ENCODE measurements at regions of chr16 and their contacts with region 1.

Region 1: GRCh38 chr16:3264137-3265036 is 8.0 kb upstream of the MEFV start:
- DNase-seq: peak; percentile 99
- H3K4me3 Mint-ChIP-seq: peak overlapping the region; percentile 80
- H3K27ac Mint-ChIP-seq: peak overlapping the region; percentile 93
- H3K4me1 Mint-ChIP-seq: peaks cover 24% of the 10 kb centered on the region
- H3K27me3 Mint-ChIP-seq: no peaks in the 10 kb centered on the region

Region 2: DNA sequence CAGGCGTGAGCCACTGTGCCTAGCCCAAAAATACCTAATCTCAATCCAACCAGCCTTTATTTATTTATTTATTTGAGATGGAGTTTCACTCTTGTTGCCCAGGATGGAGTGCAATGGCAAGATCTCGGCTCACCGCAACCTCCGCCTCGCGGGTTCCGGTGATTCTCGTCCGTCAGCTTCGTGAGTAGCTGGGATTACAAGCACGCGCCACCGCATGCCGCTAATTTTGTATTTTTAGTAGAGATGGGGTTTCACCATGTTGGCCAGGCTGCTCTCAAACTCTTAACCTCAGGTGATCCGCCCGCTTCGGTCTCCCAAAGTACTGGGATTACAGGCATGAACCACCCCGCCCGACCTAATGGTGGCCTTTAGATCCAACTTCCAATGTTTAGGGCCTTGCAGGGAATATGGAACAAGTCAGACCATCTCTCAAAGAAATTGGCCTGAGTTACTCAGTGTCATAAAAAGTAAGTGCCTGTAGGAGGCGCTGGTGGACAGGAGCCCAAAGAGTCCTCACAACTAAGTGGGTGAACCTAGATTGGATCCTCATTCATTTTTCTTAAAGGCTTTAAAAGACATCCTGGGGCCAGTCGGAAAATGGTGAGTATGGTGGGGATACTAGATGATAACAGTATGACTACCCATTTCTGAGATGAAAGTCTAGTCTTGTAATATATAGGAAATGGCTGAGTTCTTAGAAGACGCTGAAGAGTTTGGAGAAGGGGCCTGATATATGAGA is 169.9 kb before region 1 on chr16:
- CTCF ChIA-PET with region 1: no interaction called
- POLR2A ChIA-PET with region 1: no interaction called
- intact Hi-C with region 1: loop called (anchors 1 kb)
- DNase-seq: peak; percentile 75
- H3K4me3 Mint-ChIP-seq: peak overlapping the region; percentile 25
- H3K27ac Mint-ChIP-seq: peak overlapping the region; percentile 90
- H3K4me1 Mint-ChIP-seq: peaks cover 27% of the 10 kb centered on the region
- H3K27me3 Mint-ChIP-seq: no peaks in the 10 kb centered on the region

Region 3: DNA sequence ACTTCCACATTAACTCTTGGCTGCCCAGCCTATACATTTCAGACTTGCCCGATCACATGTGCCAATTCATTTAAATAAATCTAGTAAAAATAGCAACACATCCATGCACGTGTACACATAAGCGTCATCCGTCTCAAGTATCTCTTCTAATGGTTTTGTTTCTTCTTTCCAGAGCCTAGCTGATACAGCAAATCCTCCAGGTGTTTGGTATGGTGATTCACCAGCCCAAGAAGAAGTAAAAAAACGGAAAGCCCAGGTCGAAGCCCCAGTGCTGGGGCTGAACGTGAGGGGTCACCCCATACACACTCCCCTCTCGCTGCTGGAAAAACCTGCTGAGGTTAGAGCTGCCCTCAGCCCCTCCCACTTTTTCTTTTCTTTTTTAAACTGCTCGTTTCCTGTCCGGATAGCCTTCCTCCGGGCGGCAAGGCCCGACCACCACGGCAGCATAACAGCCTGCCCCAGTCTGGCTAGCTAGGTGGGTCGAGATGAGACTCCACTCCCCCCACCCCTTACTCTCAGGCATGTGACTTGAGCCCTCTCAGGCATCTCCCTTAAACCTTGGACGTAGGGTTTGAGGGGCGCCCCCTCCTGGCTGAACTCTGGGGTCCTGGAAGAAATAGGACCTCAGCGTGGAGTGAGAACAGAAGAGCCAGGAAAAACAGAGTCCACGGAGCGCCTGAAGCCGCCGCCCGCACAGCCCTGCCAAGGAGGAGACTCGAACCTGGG is 90.3 kb before region 1 on chr16:
- CTCF ChIA-PET with region 1: no interaction called
- POLR2A ChIA-PET with region 1: no interaction called
- intact Hi-C with region 1: loop called (anchors 5 kb)
- DNase-seq: peak; percentile 57
- H3K4me3 Mint-ChIP-seq: peak overlapping the region; percentile 71
- H3K27ac Mint-ChIP-seq: peak overlapping the region; percentile 19
- H3K4me1 Mint-ChIP-seq: peaks cover 34% of the 10 kb centered on the region
- H3K27me3 Mint-ChIP-seq: peaks cover 51% of the 10 kb centered on the region

Region 4: DNA sequence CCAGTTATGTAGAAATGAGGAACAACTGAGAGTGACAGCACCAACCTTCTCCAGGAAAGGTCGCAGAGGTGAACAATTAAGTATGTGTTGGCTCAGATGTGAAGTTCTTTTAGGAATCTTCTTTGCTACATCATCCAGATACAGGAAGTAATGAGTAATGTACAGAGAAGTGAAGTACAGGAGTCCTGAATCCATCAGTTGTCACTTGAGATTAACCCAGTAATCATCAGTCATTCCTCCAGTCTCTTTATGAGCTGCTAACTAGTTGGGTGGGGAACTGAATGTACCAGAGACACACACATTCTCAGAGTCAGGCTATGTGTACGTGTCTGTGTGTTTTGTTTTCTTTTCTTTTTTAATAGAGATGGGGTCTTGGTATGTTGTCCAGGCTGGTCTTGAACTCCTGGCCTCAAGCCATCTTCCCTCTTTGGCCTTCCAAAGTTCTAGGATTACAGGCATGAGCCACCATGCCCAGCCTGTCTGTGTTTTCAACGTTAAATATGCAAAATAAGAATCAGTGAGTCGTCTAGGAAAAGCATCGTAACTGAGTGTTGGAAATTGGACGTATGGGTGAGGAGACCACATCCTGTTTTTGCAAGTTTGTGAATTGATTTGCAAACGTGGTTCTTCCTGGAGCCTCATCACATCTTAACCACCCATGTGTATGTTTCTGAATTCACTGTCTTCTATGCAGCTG is 49.3 kb before region 1 on chr16:
- CTCF ChIA-PET with region 1: no interaction called
- POLR2A ChIA-PET with region 1: interaction called, 7 read pairs
- intact Hi-C with region 1: loop called (anchors 1 kb)
- DNase-seq: peak; percentile 69
- H3K4me3 Mint-ChIP-seq: peak overlapping the region; percentile 56
- H3K27ac Mint-ChIP-seq: peak overlapping the region; percentile 99
- H3K4me1 Mint-ChIP-seq: peaks cover 44% of the 10 kb centered on the region
- H3K27me3 Mint-ChIP-seq: no peaks in the 10 kb centered on the region

Region 5: DNA sequence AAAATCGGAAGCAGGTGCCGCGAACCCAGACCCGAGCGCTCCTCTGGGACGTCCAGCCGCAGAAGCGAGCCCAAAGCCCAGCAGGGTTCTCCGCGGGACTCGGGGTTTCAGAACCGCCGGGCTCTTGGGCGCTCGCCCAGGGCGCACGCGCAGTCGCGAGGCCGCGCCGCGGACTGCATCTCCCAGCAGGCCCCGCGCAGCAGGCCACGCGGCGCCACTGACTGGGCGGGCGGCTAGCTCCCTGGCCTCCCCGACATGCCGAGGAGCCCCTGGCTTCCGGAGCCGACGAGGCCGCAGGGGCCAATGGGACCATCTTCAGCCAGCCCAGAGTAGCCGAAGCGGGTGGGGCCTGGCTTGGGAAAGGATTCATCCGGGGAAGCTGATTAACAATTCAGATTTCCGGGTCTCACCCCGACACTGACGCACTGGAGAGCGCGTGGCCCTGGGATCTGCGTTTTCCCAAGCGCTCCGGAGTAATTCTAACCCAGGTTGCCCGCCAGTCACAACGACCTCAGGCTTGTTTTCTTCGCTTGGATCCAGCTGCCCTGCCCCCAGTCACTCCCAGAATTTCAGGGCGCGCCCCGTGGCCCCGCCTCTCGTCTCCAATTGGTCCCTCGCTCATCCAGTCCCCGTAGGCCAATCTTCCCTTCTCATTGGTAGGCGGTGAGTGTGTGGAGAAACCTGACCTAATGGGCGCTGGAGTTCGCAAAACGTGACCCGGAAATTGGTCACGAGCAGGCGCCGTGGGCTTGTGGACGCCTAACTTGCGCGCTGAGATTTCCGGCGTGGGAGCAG is 18.5 kb after region 1 on chr16 and contains the start of gene ZNF263:
- CTCF ChIA-PET with region 1: interaction called, 10 read pairs
- POLR2A ChIA-PET with region 1: interaction called, 25 read pairs
- intact Hi-C with region 1: loop called (anchors 1 kb)
- DNase-seq: peak; percentile 96
- H3K4me3 Mint-ChIP-seq: peak within 1 kb of the TSS; percentile 91
- H3K27ac Mint-ChIP-seq: peak within 1 kb of the TSS; percentile 99
- H3K4me1 Mint-ChIP-seq: peaks cover 31% of the 10 kb centered on the region
- H3K27me3 Mint-ChIP-seq: no peaks in the 10 kb centered on the region
- total RNA-seq, gene ZNF263: 13.2 to 13.5 TPM

Region 6: GRCh38 chr16:3457434-3458252 is 193.3 kb after region 1 on chr16:
- CTCF ChIA-PET with region 1: interaction called, 3 read pairs
- POLR2A ChIA-PET with region 1: no interaction called
- intact Hi-C with region 1: loop called (anchors 1 kb)
- DNase-seq: peak; percentile 92
- H3K4me3 Mint-ChIP-seq: peak overlapping the region; percentile 80
- H3K27ac Mint-ChIP-seq: peak overlapping the region; percentile 90
- H3K4me1 Mint-ChIP-seq: peaks cover 41% of the 10 kb centered on the region
- H3K27me3 Mint-ChIP-seq: no peaks in the 10 kb centered on the region